T-cell (primary cell): ENCODE measurements at regions of chrX and their contacts with region 1.

Region 1: DNA sequence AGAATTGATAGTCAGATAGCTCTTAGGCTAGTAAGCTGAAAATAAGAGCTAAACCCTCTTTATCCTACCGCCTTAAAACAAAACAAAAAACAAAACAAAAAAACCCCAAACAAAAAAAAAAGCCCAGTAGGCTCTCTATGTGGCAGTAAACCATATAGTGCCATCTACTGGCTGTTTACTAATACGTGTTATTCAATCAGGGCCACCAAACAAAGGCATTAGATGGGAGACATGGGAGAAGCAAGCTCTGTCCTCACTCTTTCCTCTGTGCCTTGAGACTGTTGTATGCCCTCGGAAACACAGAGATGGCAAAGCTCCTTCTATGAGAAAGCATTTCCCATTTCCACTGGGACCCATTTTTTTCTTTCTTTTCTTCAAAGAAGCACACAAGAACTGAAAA is 148.8 kb upstream of the MID1 start:
- DNase-seq: peak in 1 of 35 experiments; percentile 5
- ATAC-seq: no peak
- H3K4me3 ChIP-seq: no peak overlapping the region
- H3K4me3 Mint-ChIP-seq: no peak overlapping the region
- H3K27ac ChIP-seq: no peak overlapping the region
- H3K27ac Mint-ChIP-seq: no peak overlapping the region
- H3K4me1 ChIP-seq: no peaks in the 10 kb centered on the region
- H3K4me1 Mint-ChIP-seq: no peaks in the 10 kb centered on the region
- H3K27me3 ChIP-seq: no peaks in the 10 kb centered on the region
- H3K27me3 Mint-ChIP-seq: no peaks in the 10 kb centered on the region

Region 2: GRCh38 chrX:10677490-10677889 is 91.7 kb before region 1 on chrX:
- CTCF ChIA-PET with region 1: interaction called in 1 of 2 experiments, 11 read pairs
- POLR2A ChIA-PET with region 1: no interaction called
- DNase-seq: no peak
- ATAC-seq: no peak
- H3K4me3 ChIP-seq: no peak overlapping the region
- H3K4me3 Mint-ChIP-seq: no peak overlapping the region
- H3K27ac ChIP-seq: no peak overlapping the region
- H3K27ac Mint-ChIP-seq: no peak overlapping the region
- H3K4me1 ChIP-seq: no peaks in the 10 kb centered on the region
- H3K4me1 Mint-ChIP-seq: no peaks in the 10 kb centered on the region
- H3K27me3 ChIP-seq: no peaks in the 10 kb centered on the region
- H3K27me3 Mint-ChIP-seq: peaks cover 0 to 16% of the 10 kb centered on the region in 2 donors

Region 3: GRCh38 chrX:10841579-10841978 is 72.4 kb after region 1 on chrX:
- CTCF ChIA-PET with region 1: no interaction called
- POLR2A ChIA-PET with region 1: no interaction called
- DNase-seq: no peak
- ATAC-seq: no peak
- H3K4me3 ChIP-seq: no peak overlapping the region
- H3K4me3 Mint-ChIP-seq: no peak overlapping the region
- H3K27ac ChIP-seq: no peak overlapping the region
- H3K27ac Mint-ChIP-seq: no peak overlapping the region
- H3K4me1 ChIP-seq: no peaks in the 10 kb centered on the region
- H3K4me1 Mint-ChIP-seq: no peaks in the 10 kb centered on the region
- H3K27me3 ChIP-seq: no peaks in the 10 kb centered on the region
- H3K27me3 Mint-ChIP-seq: no peaks in the 10 kb centered on the region

Region 4: DNA sequence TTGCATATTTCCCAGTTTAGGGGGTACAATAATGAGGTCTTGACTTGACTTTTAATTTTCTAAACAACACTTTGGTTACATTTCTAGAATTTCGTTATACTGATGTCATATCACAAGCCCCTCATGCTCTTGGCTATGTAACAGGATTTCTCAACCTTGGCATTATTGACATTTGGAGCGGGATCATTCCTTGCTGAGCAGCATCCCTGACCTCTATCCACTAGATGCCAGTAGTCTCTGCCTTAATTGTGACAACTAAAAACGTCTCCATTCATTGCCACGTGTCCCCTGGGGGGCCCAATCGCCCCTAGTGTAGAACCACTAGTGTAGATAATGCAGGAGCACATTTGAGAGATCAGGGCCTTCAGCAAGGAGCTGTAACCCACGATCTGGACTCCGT is 85.4 kb after region 1 on chrX:
- CTCF ChIA-PET with region 1: no interaction called
- POLR2A ChIA-PET with region 1: no interaction called
- DNase-seq: no peak
- ATAC-seq: no peak
- H3K4me3 ChIP-seq: no peak overlapping the region
- H3K4me3 Mint-ChIP-seq: no peak overlapping the region
- H3K27ac ChIP-seq: no peak overlapping the region
- H3K27ac Mint-ChIP-seq: no peak overlapping the region
- H3K4me1 ChIP-seq: no peaks in the 10 kb centered on the region
- H3K4me1 Mint-ChIP-seq: no peaks in the 10 kb centered on the region
- H3K27me3 ChIP-seq: no peaks in the 10 kb centered on the region
- H3K27me3 Mint-ChIP-seq: peaks cover 0 to 3% of the 10 kb centered on the region in 2 donors